Activated B cell treated with CpG ODN at 0.5 μM for 24 hours (primary cell): ENCODE measurements at regions of chr5 and their contacts with region 1.

Region 1: GRCh38 chr5:69166686-69167492 is at the start of gene CCNB1:
- DNase-seq: peak; percentile 94
- ATAC-seq: peak; percentile 100
- H3K4me3 Mint-ChIP-seq: peak within 1 kb of the TSS; percentile 96
- H3K27ac Mint-ChIP-seq: peak within 1 kb of the TSS; percentile 89
- H3K4me1 Mint-ChIP-seq: peaks cover 23% of the 10 kb centered on the region
- H3K27me3 Mint-ChIP-seq: no peaks in the 10 kb centered on the region
- CTCF ChIP-seq: no peak
- total RNA-seq, gene CCNB1: 10.6 and 12.7 TPM in 2 replicates

Region 2: GRCh38 chr5:69136293-69136692 is 30.6 kb before region 1 on chr5:
- CTCF ChIA-PET with region 1: no interaction called
- POLR2A ChIA-PET with region 1: no interaction called
- intact Hi-C with region 1: loop called (anchors 1 kb)
- DNase-seq: no peak
- ATAC-seq: peak; percentile 85
- H3K4me3 Mint-ChIP-seq: peak overlapping the region; percentile 25
- H3K27ac Mint-ChIP-seq: peak overlapping the region; percentile 86
- H3K4me1 Mint-ChIP-seq: peaks cover 24% of the 10 kb centered on the region
- H3K27me3 Mint-ChIP-seq: no peaks in the 10 kb centered on the region
- CTCF ChIP-seq: no peak

Region 3: DNA sequence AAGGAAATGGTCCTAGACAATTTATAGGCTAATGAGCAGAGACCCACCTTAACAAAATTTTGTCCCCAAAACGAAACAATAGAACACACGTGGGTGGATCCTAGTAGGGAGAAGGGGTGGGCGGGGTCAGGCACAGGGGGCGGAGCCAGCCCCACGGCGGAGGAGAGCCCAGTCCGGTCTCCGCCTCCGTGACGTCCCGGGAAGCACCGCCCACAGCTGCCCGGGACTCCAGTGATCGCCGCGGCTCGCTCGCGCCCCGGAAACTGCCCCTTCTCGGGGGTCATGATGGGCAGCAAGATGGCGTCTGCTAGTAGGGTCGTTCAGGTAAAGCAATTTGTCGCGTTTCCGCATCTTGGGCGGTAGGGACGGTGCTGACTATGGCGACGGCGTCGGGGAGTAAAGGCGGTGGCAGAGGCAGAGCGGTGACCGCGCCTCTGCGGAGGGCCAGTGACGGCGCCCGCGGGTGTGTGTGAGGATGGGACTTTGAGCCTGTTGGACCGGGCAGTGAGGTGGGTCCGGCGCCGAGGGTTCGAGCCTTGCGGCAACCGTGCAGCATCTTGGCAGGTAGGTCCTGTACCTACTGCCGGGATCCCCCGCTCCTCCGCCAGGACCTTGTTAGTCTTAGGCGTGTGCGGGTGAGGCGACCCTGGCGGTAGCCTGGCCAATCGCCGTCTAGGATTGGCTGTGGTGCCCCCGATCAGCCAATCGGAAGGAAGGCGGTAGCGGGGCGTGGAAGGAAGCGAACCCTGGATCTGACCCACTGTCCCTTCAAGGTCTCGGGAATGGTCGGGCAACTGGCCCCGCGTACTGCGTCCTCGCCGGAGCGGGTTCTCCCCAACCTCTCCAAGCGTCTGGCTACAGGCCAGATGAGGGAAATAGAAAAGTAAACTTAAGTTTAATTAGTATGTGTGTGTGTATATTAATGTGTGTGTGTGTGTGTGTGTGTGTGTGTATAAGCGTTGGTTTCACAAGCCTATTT is 50.9 kb after region 1 on chr5:
- CTCF ChIA-PET with region 1: interaction called, 3 read pairs
- POLR2A ChIA-PET with region 1: no interaction called
- intact Hi-C with region 1: loop called (anchors 1 kb)
- DNase-seq: peak; percentile 90
- ATAC-seq: peak; percentile 89
- H3K4me3 Mint-ChIP-seq: peak overlapping the region; percentile 100
- H3K27ac Mint-ChIP-seq: peak overlapping the region; percentile 98
- H3K4me1 Mint-ChIP-seq: peaks cover 24% of the 10 kb centered on the region
- H3K27me3 Mint-ChIP-seq: no peaks in the 10 kb centered on the region
- CTCF ChIP-seq: no peak

Region 4: GRCh38 chr5:69334793-69335268 is 167.9 kb after region 1 on chr5:
- CTCF ChIA-PET with region 1: no interaction called
- POLR2A ChIA-PET with region 1: no interaction called
- intact Hi-C with region 1: loop called (anchors 1 kb)
- DNase-seq: peak; percentile 56
- ATAC-seq: peak; percentile 72
- H3K4me3 Mint-ChIP-seq: peak overlapping the region; percentile 46
- H3K27ac Mint-ChIP-seq: peak overlapping the region; percentile 59
- H3K4me1 Mint-ChIP-seq: peaks cover 25% of the 10 kb centered on the region
- H3K27me3 Mint-ChIP-seq: no peaks in the 10 kb centered on the region
- CTCF ChIP-seq: no peak